B cell (primary cell): ENCODE measurements at regions of chr6 and their contacts with region 1.

Region 1: GRCh38 chr6:106519460-106520394 is 109.6 kb downstream of the RTN4IP1 start:
- DNase-seq: peak; percentile 81
- ATAC-seq: peak; percentile 65
- H3K4me3 ChIP-seq: peak overlapping the region; percentile 9 to 83 (median 54)
- H3K4me3 Mint-ChIP-seq: peak overlapping the region; percentile 88
- H3K27ac ChIP-seq: peak overlapping the region; percentile 81
- H3K27ac Mint-ChIP-seq: peak overlapping the region; percentile 93
- H3K4me1 ChIP-seq: peaks cover 81 to 83% of the 10 kb centered on the region in 2 donors
- H3K4me1 Mint-ChIP-seq: peaks cover 81% of the 10 kb centered on the region
- H3K27me3 ChIP-seq: no peaks in the 10 kb centered on the region
- H3K27me3 Mint-ChIP-seq: no peaks in the 10 kb centered on the region
- CTCF ChIP-seq: no peak

Region 2: DNA sequence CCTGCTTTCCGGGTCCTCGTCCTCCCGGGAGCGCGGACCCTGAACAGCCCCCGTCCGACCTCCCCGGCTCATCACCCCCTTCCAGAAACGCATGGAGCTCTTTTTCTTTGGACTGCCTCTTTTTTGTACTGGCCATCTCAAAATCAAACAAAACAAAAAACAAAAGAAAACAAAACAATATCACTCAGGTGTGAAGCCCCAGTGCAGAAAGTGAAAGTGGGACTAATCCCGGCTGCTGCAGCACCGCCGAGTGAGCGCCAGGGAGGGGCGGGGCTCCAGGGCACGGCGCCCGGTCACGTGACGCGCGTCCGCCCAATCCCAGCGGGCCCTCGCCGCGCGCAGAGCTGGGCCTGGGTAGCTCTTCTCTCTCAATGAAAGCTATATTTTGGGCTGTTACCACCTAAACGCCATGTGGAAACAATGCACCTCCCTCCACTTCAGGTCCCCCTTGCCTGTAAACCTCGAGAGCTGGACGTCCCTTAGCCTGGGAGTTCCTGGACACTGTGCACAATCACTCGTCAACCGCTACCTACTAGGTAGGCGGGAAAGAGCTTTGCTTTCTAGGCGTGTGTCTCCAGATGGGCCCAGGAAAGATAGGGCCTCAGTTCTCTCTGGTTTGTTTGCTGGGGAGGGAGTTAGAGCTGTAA is 527.3 kb before region 1 on chr6:
- CTCF ChIA-PET with region 1: no interaction called
- POLR2A ChIA-PET with region 1: no interaction called
- intact Hi-C with region 1: loop called (anchors 5 kb)
- DNase-seq: peak; percentile 94
- ATAC-seq: peak; percentile 93
- H3K4me3 ChIP-seq: peak overlapping the region; percentile 81 to 96 (median 89)
- H3K4me3 Mint-ChIP-seq: peak overlapping the region; percentile 90
- H3K27ac ChIP-seq: peak overlapping the region; percentile 91
- H3K27ac Mint-ChIP-seq: peak overlapping the region; percentile 94
- H3K4me1 ChIP-seq: peaks cover 26 to 28% of the 10 kb centered on the region in 2 donors
- H3K4me1 Mint-ChIP-seq: peaks cover 26% of the 10 kb centered on the region
- H3K27me3 ChIP-seq: peaks cover 4 to 34% (median 22%) of the 10 kb centered on the region in 4 experiments
- H3K27me3 Mint-ChIP-seq: peaks cover 57% of the 10 kb centered on the region
- CTCF ChIP-seq: no peak

Region 3: DNA sequence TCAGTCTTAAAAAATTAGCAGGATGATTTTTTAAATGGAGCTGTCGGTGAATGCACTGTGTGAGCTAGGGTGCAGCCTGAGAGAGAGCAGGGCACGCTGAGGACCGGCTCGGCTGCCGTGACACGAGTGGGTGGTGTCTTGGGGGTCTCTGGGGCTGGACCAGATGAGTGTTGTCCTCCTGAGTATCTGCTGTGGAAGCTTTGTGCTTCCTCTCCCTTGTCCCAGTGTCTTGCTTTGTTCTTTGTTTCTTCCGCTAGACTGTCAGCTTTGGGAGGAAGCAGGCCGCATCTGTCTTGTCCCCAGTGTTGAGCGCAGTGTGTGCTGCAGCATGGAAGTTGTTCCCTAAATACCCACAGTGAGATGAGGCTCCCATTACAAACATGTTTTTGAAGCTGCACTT is 20.2 kb after region 1 on chr6:
- CTCF ChIA-PET with region 1: interaction called, 35 read pairs
- POLR2A ChIA-PET with region 1: interaction called, 9 read pairs
- intact Hi-C with region 1: loop called (anchors 2 kb)
- DNase-seq: no peak
- ATAC-seq: no peak
- H3K4me3 ChIP-seq: no peak overlapping the region
- H3K4me3 Mint-ChIP-seq: peak overlapping the region; percentile 20
- H3K27ac ChIP-seq: peak overlapping the region in 1 of 2 donors; percentile 48
- H3K27ac Mint-ChIP-seq: peak overlapping the region; percentile 82
- H3K4me1 ChIP-seq: peaks cover 37% of the 10 kb centered on the region in 2 donors
- H3K4me1 Mint-ChIP-seq: peaks cover 55% of the 10 kb centered on the region
- H3K27me3 ChIP-seq: no peaks in the 10 kb centered on the region
- H3K27me3 Mint-ChIP-seq: no peaks in the 10 kb centered on the region
- CTCF ChIP-seq: no peak

Region 4: GRCh38 chr6:106556368-106556960 is 36.7 kb after region 1 on chr6:
- CTCF ChIA-PET with region 1: interaction called, 156 read pairs
- POLR2A ChIA-PET with region 1: no interaction called
- intact Hi-C with region 1: no loop called
- DNase-seq: peak; percentile 58
- ATAC-seq: peak; percentile 57
- H3K4me3 ChIP-seq: no peak overlapping the region
- H3K4me3 Mint-ChIP-seq: no peak overlapping the region
- H3K27ac ChIP-seq: no peak overlapping the region
- H3K27ac Mint-ChIP-seq: no peak overlapping the region
- H3K4me1 ChIP-seq: peaks cover 4% of the 10 kb centered on the region in 2 donors
- H3K4me1 Mint-ChIP-seq: peaks cover 16% of the 10 kb centered on the region
- H3K27me3 ChIP-seq: no peaks in the 10 kb centered on the region
- H3K27me3 Mint-ChIP-seq: no peaks in the 10 kb centered on the region
- CTCF ChIP-seq: peak; percentile 78

Region 5: DNA sequence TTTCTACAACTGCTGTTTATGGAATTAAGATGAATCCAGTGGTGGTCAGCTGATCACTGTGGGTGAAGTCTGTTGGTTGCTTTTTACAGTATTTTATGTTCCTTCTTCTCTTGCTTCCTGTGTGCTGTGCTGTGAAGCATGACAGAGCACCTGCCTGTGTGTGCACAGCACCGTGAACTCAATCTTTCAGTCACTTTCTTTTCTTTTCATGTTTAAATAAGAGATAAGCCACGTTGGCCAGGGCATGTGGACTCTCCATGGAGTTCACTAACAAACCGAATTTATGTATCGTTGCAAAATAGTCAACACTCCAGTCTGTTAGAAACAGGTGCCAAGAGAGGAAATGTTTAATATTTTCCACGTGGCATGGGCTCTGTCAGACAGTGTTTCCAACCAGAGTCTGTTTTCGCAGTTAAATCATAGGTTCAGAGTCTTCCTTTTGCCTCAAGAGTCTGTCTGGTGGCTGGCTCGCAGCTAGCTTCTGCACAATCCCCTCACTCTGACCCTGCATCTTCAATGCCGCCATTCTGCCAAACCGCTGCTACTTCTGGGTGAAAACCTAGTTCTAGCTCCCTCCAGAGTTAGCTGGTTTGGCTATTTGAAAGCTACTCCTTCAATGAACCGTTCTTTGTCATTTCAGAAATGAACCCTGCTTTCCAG is 182.9 kb after region 1 on chr6:
- CTCF ChIA-PET with region 1: no interaction called
- POLR2A ChIA-PET with region 1: no interaction called
- intact Hi-C with region 1: loop called (anchors 5 kb)
- DNase-seq: peak; percentile 82
- ATAC-seq: peak; percentile 88
- H3K4me3 ChIP-seq: peak overlapping the region; percentile 18 to 45 (median 33)
- H3K4me3 Mint-ChIP-seq: peak overlapping the region; percentile 79
- H3K27ac ChIP-seq: peak overlapping the region; percentile 90 to 94
- H3K27ac Mint-ChIP-seq: peak overlapping the region; percentile 98
- H3K4me1 ChIP-seq: peaks cover 72 to 75% of the 10 kb centered on the region in 2 donors
- H3K4me1 Mint-ChIP-seq: peaks cover 89% of the 10 kb centered on the region
- H3K27me3 ChIP-seq: no peaks in the 10 kb centered on the region
- H3K27me3 Mint-ChIP-seq: no peaks in the 10 kb centered on the region
- CTCF ChIP-seq: no peak